OCI-LY7 (cell line): ENCODE measurements at regions of chr7 and their contacts with region 1.

Region 1: DNA sequence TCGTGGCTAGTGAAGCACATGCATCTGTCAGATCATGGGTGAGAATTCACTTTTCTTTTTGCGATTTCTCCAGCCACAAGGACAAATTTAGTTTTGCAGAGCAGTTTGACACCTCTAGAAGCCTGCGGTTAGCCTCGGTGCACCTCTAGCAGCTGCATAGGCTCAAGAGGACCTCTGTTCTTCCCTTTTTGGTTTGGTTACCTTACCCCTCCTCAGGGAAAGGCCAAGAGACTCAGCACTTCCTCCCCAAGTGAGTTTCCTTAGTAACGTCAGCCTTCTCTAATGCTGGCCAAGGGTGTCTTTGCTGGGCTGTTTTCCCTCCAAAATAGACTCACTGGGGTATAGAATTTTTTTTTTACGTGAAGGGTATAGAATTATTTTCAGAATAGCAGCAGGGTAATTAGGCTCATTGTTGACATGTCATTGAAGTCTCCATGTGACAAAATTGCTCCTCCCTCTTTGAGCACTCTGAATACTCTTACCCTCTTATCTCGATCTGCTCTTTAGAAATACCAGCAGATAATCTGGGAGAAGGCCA is 97.8 kb downstream of the AUTS2 start:
- DNase-seq: peak; percentile 95
- H3K4me3 ChIP-seq: peak overlapping the region; percentile 58
- H3K27ac ChIP-seq: peak overlapping the region; percentile 98
- H3K4me1 ChIP-seq: peaks cover 96% of the 10 kb centered on the region
- CTCF ChIP-seq: no peak

Region 2: GRCh38 chr7:69598081-69598486 is 98.0 kb before region 1 on chr7 and contains the start of gene AUTS2:
- CTCF ChIA-PET with region 1: interaction called, 3 read pairs
- POLR2A ChIA-PET with region 1: interaction called, 3 read pairs
- intact Hi-C with region 1: loop called (anchors 1 kb)
- DNase-seq: peak; percentile 94
- H3K4me3 ChIP-seq: peak within 1 kb of the TSS; percentile 97
- H3K27ac ChIP-seq: peak within 1 kb of the TSS; percentile 58
- H3K4me1 ChIP-seq: peaks cover 35% of the 10 kb centered on the region
- CTCF ChIP-seq: no peak
- total RNA-seq, gene AUTS2: 34.3 and 37.9 TPM in 2 replicates

Region 3: DNA sequence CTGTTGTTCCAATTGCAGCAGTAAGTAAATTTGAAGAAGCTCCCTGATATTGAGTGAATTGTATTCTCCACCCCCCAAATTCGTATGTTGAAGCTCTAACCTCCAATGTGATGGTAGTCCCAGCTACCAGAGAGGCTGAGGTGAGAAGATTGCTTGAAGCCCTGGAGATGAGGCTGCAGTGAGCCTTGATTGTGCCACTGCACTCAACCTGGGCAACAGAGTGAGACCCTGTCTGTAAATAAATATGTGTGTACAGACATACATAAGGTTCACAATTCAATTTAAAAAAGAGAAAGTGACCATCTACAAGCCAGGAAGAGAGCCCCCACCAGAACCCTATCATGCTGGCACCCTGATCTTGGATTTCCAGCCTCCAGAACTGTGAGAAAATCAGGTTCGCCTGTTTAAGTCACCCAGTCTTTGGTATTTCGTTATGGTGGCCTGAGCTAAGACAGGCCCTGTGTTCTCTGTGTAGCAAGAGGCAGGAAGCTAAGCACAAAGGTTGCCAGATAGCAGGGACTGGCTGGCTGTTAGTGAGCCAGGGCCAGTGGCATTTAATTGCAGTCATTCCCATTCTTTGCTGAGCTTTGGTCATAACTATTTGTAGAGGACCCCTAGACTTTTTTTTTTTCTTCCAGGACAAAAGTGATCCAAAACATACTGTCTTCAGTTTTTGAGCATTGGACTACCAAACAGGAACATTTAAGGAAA is 52.3 kb before region 1 on chr7:
- CTCF ChIA-PET with region 1: no interaction called
- POLR2A ChIA-PET with region 1: no interaction called
- intact Hi-C with region 1: no loop called
- DNase-seq: no peak
- H3K4me3 ChIP-seq: no peak overlapping the region
- H3K27ac ChIP-seq: no peak overlapping the region
- H3K4me1 ChIP-seq: peaks cover 23% of the 10 kb centered on the region
- CTCF ChIP-seq: no peak

Region 4: GRCh38 chr7:69757981-69758430 is 61.9 kb after region 1 on chr7:
- CTCF ChIA-PET with region 1: no interaction called
- POLR2A ChIA-PET with region 1: interaction called, 5 read pairs
- intact Hi-C with region 1: loop called (anchors 5 kb)
- DNase-seq: no peak
- H3K4me3 ChIP-seq: no peak overlapping the region
- H3K27ac ChIP-seq: no peak overlapping the region
- H3K4me1 ChIP-seq: peaks cover 72% of the 10 kb centered on the region
- CTCF ChIP-seq: no peak

Region 5: DNA sequence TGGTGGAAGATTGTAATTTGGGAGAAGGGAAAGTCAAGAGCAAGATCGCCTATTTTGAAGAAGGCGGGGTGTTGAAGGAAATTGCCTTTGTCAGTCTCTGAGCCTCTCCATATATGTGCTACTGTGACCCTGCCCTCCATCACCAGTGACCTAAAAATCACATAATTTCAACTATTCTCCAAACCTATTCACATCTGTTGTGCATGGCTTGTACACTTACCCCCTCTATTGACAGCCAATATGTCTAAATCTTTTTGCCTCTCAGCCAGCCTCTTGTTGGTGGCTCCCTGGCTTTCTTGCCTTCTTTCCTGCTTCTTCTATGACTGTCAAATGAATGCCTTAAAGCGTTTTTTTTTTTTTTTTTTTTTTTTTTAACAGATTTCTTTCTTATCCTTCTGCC is 197.8 kb after region 1 on chr7:
- CTCF ChIA-PET with region 1: no interaction called
- POLR2A ChIA-PET with region 1: no interaction called
- intact Hi-C with region 1: loop called (anchors 5 kb)
- DNase-seq: peak; percentile 67
- H3K4me3 ChIP-seq: no peak overlapping the region
- H3K27ac ChIP-seq: peak overlapping the region; percentile 20
- H3K4me1 ChIP-seq: peaks cover 83% of the 10 kb centered on the region
- CTCF ChIP-seq: peak; percentile 76

Region 6: DNA sequence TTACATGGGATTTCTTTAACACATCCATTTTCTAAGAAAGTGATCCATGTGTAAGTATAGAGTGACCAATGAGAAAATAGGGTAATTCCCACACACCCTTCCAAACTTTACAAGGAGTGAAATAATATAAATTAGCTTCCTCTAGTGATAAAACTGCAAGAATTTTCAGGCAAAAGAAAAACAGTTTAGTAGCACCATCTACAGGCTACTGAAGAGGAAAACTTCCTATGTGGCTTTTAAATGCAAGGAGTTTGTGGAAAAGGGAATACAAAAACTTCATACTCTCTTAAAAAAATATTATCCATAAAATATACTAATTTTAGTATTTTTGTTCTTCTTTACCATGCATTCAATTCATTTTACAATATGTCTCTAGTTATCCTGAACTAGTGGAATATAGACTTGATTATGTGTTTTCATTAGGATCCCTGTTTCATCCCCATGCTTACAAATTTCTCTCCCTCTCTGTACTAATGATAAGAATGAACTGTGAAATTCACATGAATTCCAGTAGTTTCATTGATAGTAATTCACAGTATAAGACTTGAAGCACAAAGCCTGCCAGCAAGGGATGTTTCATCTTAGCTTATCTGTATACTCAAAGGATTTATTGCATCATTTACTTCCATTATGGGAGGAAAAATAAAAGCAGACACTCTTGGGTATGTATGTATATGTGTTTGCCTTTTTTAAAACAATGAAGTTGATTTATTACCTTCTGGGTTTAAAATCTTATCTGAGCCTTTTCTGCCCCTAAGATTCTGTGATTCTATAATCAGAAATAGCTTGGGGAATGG is 345.0 kb after region 1 on chr7:
- CTCF ChIA-PET with region 1: no interaction called
- POLR2A ChIA-PET with region 1: no interaction called
- intact Hi-C with region 1: loop called (anchors 10 kb)
- DNase-seq: peak; percentile 28
- H3K4me3 ChIP-seq: no peak overlapping the region
- H3K27ac ChIP-seq: no peak overlapping the region
- H3K4me1 ChIP-seq: peaks cover 12% of the 10 kb centered on the region
- CTCF ChIP-seq: peak; percentile 82

Region 7: GRCh38 chr7:70693686-70694360 is 997.7 kb after region 1 on chr7:
- CTCF ChIA-PET with region 1: no interaction called
- POLR2A ChIA-PET with region 1: no interaction called
- intact Hi-C with region 1: loop called (anchors 10 kb)
- DNase-seq: peak; percentile 81
- H3K4me3 ChIP-seq: peak overlapping the region; percentile 79
- H3K27ac ChIP-seq: no peak overlapping the region
- H3K4me1 ChIP-seq: peaks cover 23% of the 10 kb centered on the region
- CTCF ChIP-seq: no peak